ENCODE measurements at regions of chr2 and their contacts with region 1.

Region 1: GRCh38 chr2:127479219-127479825 is 47.0 kb downstream of the IWS1 start:
- DNase-seq: no peak
- H3K4me3 ChIP-seq: no peak overlapping the region
- CTCF ChIP-seq: peak; percentile 60

Region 2: DNA sequence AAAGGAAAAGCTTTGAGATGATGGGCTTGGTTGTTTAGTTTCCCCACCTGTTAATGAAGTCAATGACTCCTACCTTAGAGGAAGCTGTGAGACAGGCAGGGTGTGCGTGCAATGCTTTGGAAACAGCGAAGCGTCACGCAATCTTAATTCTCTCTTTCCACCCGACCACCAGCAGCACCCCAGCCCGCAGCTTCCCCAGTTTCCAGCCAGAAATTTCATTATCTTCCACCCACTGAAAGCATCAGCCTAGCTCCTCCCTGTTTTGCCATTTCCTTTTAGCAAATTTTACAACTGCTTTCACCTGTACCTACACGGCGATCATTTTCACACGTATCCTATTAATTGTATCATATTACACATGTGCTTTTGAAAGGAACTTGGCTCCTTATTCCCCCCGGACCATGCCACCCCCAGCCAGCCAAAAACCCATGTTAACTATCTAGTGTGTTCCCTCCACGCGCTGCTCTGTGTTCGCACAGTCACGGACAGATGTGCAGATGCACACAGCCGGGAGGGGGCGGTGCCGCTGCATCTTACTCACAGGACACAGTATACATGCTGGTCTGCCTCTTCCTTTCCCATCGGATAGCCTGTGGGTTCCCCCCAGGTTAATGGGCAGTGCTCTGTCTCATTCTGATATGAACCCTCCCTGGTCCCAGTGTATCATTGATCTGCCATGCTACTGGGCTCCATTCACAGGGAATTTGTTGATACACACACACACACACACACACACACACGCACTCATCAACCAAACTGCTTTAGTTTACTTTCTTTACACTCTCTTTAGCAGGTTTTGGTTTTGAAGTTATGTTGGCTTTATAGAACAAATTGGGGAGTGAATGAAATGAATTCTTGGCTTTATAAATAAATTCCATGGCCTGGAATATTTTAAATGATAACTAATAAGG is 281.6 kb before region 1 on chr2:
- CTCF ChIA-PET with region 1: interaction called, 18 read pairs
- POLR2A ChIA-PET with region 1: no interaction called
- DNase-seq: no peak
- H3K4me3 ChIP-seq: no peak overlapping the region
- CTCF ChIP-seq: peak; percentile 90

Region 3: GRCh38 chr2:127305990-127306585 is 173.2 kb before region 1 on chr2:
- CTCF ChIA-PET with region 1: interaction called, 14 read pairs
- POLR2A ChIA-PET with region 1: no interaction called
- DNase-seq: no peak
- H3K4me3 ChIP-seq: no peak overlapping the region
- CTCF ChIP-seq: no peak

Region 4: DNA sequence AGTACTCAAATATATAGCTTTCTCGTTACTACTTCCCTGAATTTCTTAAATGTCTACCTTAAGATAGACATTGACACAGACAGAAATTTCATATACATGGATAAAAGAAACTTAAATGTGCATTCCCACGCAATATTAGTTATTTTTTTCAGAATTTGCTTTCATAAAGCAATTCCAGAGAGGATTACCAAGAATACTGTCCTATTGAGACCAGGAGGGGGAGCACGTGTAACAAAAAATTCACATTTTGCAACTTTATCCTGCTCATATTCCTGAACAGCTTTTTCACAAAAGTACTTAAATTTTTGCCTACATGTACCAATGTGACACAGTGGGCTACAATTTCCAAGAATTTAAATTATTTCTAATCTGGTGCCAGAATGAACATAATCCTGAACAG is 154.7 kb before region 1 on chr2:
- CTCF ChIA-PET with region 1: interaction called, 225 read pairs
- POLR2A ChIA-PET with region 1: no interaction called
- DNase-seq: no peak
- H3K4me3 ChIP-seq: no peak overlapping the region
- CTCF ChIP-seq: peak; percentile 54

Region 5: GRCh38 chr2:127342101-127342500 is 137.2 kb before region 1 on chr2:
- CTCF ChIA-PET with region 1: interaction called, 10 read pairs
- POLR2A ChIA-PET with region 1: no interaction called
- DNase-seq: no peak
- H3K4me3 ChIP-seq: no peak overlapping the region
- CTCF ChIP-seq: no peak

Region 6: GRCh38 chr2:127408004-127408806 is 71.1 kb before region 1 on chr2:
- CTCF ChIA-PET with region 1: no interaction called
- POLR2A ChIA-PET with region 1: no interaction called
- DNase-seq: no peak
- H3K4me3 ChIP-seq: peak overlapping the region; percentile 47
- CTCF ChIP-seq: peak; percentile 1

Region 7: GRCh38 chr2:127463155-127463991 is 15.9 kb before region 1 on chr2:
- CTCF ChIA-PET with region 1: interaction called, 70 read pairs
- POLR2A ChIA-PET with region 1: interaction called, 4 read pairs
- DNase-seq: no peak
- H3K4me3 ChIP-seq: no peak overlapping the region
- CTCF ChIP-seq: no peak

Region 8: DNA sequence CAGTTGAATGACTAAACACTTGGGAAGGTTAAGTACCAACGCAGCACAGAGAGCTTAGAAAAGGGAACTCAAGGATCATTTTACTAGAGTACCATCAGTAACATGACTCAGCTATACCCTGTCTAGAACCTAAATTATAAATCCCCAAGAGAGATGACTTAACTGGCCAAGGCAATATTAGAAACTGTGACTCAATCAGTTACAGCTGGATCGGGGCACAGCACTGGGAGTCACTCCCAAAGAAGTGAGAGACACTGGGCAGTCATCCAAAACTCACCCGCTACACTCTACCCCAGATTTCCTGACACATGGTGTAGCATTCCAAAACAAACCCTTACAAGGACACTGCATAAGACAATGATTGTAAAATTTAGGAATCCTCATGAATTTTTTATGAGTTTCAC is 29.3 kb after region 1 on chr2:
- CTCF ChIA-PET with region 1: interaction called, 14 read pairs
- POLR2A ChIA-PET with region 1: no interaction called
- DNase-seq: peak; percentile 98
- H3K4me3 ChIP-seq: no peak overlapping the region
- CTCF ChIP-seq: no peak

Region 9: GRCh38 chr2:127520424-127520823 is 41.1 kb after region 1 on chr2:
- CTCF ChIA-PET with region 1: no interaction called
- POLR2A ChIA-PET with region 1: no interaction called
- DNase-seq: no peak
- H3K4me3 ChIP-seq: no peak overlapping the region
- CTCF ChIP-seq: no peak